CD8-positive, alpha-beta T cell (primary cell): ENCODE measurements at regions of chrX and their contacts with region 1.

Region 1: GRCh38 chrX:14029425-14030173 is at the start of gene GEMIN8:
- DNase-seq: peak; percentile 60 to 93 (median 87)
- ATAC-seq: peak; percentile 88
- H3K4me3 ChIP-seq: peak within 1 kb of the TSS; percentile 82 to 98
- H3K4me3 Mint-ChIP-seq: peak within 1 kb of the TSS; percentile 94
- H3K27ac ChIP-seq: peak within 1 kb of the TSS; percentile 93 to 95
- H3K27ac Mint-ChIP-seq: peak within 1 kb of the TSS; percentile 98
- H3K4me1 ChIP-seq: peaks cover 21% of the 10 kb centered on the region
- H3K4me1 Mint-ChIP-seq: peaks cover 39% of the 10 kb centered on the region
- H3K27me3 ChIP-seq: no peaks in the 10 kb centered on the region
- H3K27me3 Mint-ChIP-seq: no peaks in the 10 kb centered on the region
- CTCF ChIP-seq: no peak
- total RNA-seq, gene GEMIN8: 7.8 to 9.4 TPM

Region 2: DNA sequence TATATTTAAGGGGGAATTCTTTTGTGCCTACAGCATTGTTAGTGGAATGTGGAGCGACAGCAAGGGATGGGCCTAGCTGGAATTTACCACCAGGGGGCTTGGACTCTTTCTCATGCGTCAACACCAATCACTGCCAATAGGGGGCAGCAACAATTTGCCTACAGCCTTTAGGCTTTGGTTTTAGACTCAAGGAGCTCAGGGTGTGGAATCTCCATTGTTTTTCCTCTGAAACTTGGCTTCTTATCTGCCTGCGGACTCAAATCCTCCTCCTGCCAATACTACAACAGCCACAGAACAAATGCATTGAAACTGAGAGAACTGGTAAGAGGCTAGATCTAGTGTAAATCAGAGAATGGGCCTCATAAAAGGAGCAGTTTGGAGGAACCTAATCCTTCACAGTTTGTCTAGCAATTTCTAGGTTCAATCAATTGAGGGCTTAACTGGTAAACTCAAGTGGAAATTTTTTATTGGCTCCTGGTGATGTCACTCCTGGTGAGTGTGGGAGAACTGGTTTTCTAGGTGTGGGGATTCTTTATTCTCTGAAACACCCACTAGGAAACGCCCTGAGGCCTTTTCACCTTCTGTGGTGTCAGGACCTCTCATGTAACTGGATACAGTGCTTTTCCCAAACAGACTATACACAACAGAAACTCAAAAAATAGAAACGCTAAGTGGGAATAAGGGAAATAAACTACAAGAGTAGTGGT is 1082.6 kb before region 1 on chrX:
- CTCF ChIA-PET with region 1: interaction called, 3 read pairs
- POLR2A ChIA-PET with region 1: interaction called, 3 read pairs
- intact Hi-C with region 1: loop called (anchors 5 kb)
- DNase-seq: peak; percentile 45 to 87 (median 75)
- ATAC-seq: peak; percentile 28
- H3K4me3 ChIP-seq: no peak overlapping the region
- H3K4me3 Mint-ChIP-seq: peak overlapping the region; percentile 60
- H3K27ac ChIP-seq: peak overlapping the region; percentile 17 to 94
- H3K27ac Mint-ChIP-seq: peak overlapping the region; percentile 98
- H3K4me1 ChIP-seq: peaks cover 44% of the 10 kb centered on the region
- H3K4me1 Mint-ChIP-seq: peaks cover 58% of the 10 kb centered on the region
- H3K27me3 ChIP-seq: no peaks in the 10 kb centered on the region
- H3K27me3 Mint-ChIP-seq: no peaks in the 10 kb centered on the region
- CTCF ChIP-seq: peak; percentile 77

Region 3: GRCh38 chrX:13142891-13143290 is 886.7 kb before region 1 on chrX:
- CTCF ChIA-PET with region 1: no interaction called
- POLR2A ChIA-PET with region 1: no interaction called
- intact Hi-C with region 1: no loop called
- DNase-seq: peak in 1 of 9 experiments; percentile 7
- ATAC-seq: no peak
- H3K4me3 ChIP-seq: no peak overlapping the region
- H3K4me3 Mint-ChIP-seq: no peak overlapping the region
- H3K27ac ChIP-seq: no peak overlapping the region
- H3K27ac Mint-ChIP-seq: no peak overlapping the region
- H3K4me1 ChIP-seq: no peaks in the 10 kb centered on the region
- H3K4me1 Mint-ChIP-seq: peaks cover 10% of the 10 kb centered on the region
- H3K27me3 ChIP-seq: no peaks in the 10 kb centered on the region
- H3K27me3 Mint-ChIP-seq: no peaks in the 10 kb centered on the region
- CTCF ChIP-seq: no peak

Region 4: DNA sequence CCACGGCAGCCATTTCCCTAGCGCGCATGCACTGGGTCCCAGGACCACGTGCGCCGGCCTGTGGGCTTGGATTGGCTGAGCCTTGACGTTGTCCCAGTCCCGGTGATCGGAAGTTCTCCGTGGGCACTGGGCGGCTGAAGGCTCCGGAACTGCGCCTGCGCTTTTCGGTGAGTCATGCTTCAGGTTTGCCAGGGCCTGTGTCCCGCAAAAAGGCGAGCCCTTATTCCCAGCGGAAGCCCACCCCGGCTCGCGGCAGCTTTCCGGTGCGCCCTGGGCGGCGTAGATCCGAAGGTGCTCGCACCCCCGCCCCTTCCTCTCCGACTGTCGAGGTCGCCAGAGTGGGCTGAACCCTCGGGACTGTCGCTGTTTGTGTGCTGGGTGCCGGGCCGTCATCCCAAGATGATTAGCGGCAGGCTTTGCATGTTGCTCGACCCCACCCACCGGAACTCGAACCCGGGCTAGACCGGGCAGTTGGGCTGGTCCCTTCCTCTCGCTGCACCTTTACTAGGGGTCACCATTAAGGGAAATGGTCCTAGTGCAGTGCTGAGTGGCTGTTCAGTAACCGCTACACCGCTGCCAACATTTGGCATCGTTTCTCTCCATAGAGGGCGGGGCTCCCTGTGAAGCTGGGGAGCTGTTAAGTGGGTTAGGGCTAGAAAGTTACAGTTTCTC is 376.4 kb before region 1 on chrX and contains the start of gene TCEANC:
- CTCF ChIA-PET with region 1: interaction called, 4 read pairs
- POLR2A ChIA-PET with region 1: interaction called, 3 read pairs
- intact Hi-C with region 1: loop called (anchors 1 to 2 kb)
- DNase-seq: peak; percentile 82 to 97 (median 95)
- ATAC-seq: peak; percentile 93
- H3K4me3 ChIP-seq: peak within 1 kb of the TSS; percentile 63 to 90
- H3K4me3 Mint-ChIP-seq: peak within 1 kb of the TSS; percentile 92
- H3K27ac ChIP-seq: peak within 1 kb of the TSS; percentile 85 to 95
- H3K27ac Mint-ChIP-seq: peak within 1 kb of the TSS; percentile 98
- H3K4me1 ChIP-seq: peaks cover 17% of the 10 kb centered on the region
- H3K4me1 Mint-ChIP-seq: peaks cover 30% of the 10 kb centered on the region
- H3K27me3 ChIP-seq: no peaks in the 10 kb centered on the region
- H3K27me3 Mint-ChIP-seq: no peaks in the 10 kb centered on the region
- CTCF ChIP-seq: no peak
- total RNA-seq, gene TCEANC: 8.2 to 9.5 TPM

Region 5: GRCh38 chrX:13734278-13735172 is 295.1 kb before region 1 on chrX and contains the starts of genes OFD1 and TRAPPC2:
- CTCF ChIA-PET with region 1: no interaction called
- POLR2A ChIA-PET with region 1: interaction called, 6 read pairs
- intact Hi-C with region 1: loop called in 1 of 2 experiments (anchors 1 kb)
- DNase-seq: peak; percentile 75 to 95 (median 90)
- ATAC-seq: peak; percentile 84
- H3K4me3 ChIP-seq: peak within 1 kb of the TSS; percentile 62 to 92
- H3K4me3 Mint-ChIP-seq: peak within 1 kb of the TSS; percentile 97
- H3K27ac ChIP-seq: peak within 1 kb of the TSS; percentile 93 to 99
- H3K27ac Mint-ChIP-seq: peak within 1 kb of the TSS; percentile 99
- H3K4me1 ChIP-seq: peaks cover 46% of the 10 kb centered on the region
- H3K4me1 Mint-ChIP-seq: peaks cover 54% of the 10 kb centered on the region
- H3K27me3 ChIP-seq: no peaks in the 10 kb centered on the region
- H3K27me3 Mint-ChIP-seq: no peaks in the 10 kb centered on the region
- CTCF ChIP-seq: no peak
- total RNA-seq, gene OFD1: 49.2 to 56.7 TPM
- total RNA-seq, gene TRAPPC2: 20.5 to 24.6 TPM

Region 6: GRCh38 chrX:14872851-14873675 is 843.5 kb after region 1 on chrX and contains the starts of genes FANCB and MOSPD2:
- CTCF ChIA-PET with region 1: no interaction called
- POLR2A ChIA-PET with region 1: no interaction called
- intact Hi-C with region 1: loop called (anchors 1 to 5 kb)
- DNase-seq: peak; percentile 85 to 97 (median 92)
- ATAC-seq: peak; percentile 89
- H3K4me3 ChIP-seq: peak within 1 kb of the TSS; percentile 81 to 83
- H3K4me3 Mint-ChIP-seq: peak within 1 kb of the TSS; percentile 84
- H3K27ac ChIP-seq: peak within 1 kb of the TSS; percentile 79 to 86
- H3K27ac Mint-ChIP-seq: peak within 1 kb of the TSS; percentile 92
- H3K4me1 ChIP-seq: peaks cover 9% of the 10 kb centered on the region
- H3K4me1 Mint-ChIP-seq: peaks cover 21% of the 10 kb centered on the region
- H3K27me3 ChIP-seq: no peaks in the 10 kb centered on the region
- H3K27me3 Mint-ChIP-seq: no peaks in the 10 kb centered on the region
- CTCF ChIP-seq: no peak
- total RNA-seq, gene FANCB: 2.5 to 3.1 TPM
- total RNA-seq, gene MOSPD2: 4.2 to 4.6 TPM